H1 (cell line): ENCODE measurements at regions of chr12 and their contacts with region 1.

Region 1: DNA sequence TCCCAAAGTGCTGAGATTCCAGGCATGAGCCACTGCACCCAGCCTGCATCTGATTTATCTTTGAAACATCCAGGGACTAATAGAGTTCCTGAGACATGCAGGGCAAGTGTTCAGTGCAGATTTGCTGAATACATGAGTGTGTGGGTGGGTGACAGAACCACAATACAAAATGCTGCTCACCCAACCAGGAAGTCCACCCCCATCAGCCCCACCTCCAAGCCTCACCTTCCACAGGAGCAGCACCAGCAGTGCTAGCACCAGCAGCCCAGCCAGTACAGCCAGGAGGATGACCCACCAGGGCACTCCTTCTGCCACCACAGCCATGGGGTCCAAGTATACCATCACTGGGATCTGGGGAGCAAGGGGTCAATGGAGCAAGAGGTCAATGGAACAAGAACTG is 20.0 kb downstream of the ITGA7 start:
- DNase-seq: no peak
- H3K4me3 ChIP-seq: no peak overlapping the region
- H3K27ac ChIP-seq: no peak overlapping the region
- H3K4me1 ChIP-seq: no peaks in the 10 kb centered on the region
- H3K27me3 ChIP-seq: no peaks in the 10 kb centered on the region
- CTCF ChIP-seq: no peak
- EP300 ChIP-seq: no peak
- POLR2A ChIP-seq: no peak
- RAD21 ChIP-seq: no peak

Region 2: DNA sequence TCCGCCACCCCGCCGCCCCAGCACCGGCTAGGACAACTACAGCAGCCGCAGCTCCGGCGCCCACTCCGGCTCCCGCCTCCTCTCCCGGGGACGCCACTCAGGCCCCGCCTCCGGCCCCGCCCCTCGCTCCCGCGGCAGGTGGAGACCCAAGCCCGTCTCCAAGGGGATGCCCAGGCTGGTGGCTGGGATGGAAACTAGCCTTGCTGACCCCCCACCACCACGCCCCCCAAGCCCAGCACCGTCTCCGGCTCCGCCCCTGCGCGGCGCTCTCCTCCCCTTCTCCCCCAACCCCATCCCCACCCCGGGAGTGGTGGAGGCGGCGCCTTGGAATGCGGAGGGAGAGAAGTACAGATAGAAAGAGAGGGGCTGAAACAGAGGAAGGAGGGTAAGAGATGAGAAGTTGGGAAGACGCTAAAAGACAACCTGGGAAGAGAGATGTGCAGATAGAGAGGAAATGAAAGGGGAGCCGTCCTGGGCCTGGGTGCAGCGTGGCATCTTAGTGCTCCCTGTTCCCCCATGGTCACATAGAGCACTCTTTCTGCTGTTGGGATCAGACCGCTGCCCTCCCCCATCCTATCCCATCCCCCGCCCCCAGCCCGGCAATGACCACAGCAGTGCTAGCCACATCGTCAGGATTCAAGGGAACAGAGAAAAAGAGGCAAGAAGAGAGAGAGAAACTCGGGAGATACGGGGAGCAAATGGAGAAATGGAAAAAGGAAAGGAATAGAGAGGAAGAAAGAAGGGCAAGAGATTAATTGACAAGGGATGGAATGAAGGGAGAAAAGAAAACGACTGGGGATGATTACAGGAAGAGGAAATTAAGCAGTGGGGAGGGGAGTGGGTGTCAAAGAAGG is 20.3 kb after region 1 on chr12 and contains the start of gene ITGA7:
- CTCF ChIA-PET with region 1: interaction called, 34 read pairs
- POLR2A ChIA-PET with region 1: interaction called, 10 read pairs
- DNase-seq: peak; percentile 83 to 99
- H3K4me3 ChIP-seq: peak within 1 kb of the TSS; percentile 83 to 88 (median 86)
- H3K27ac ChIP-seq: 0 out of 2 replicates have a peak within 1 kb of the TSS, but pooled peaks have one; percentile 54
- H3K4me1 ChIP-seq: peaks cover 0 to 25% (median 8%) of the 10 kb centered on the region in 4 experiments; a peak in 5 of 7 replicates
- H3K27me3 ChIP-seq: peaks cover 0 to 3% (median 0%) of the 10 kb centered on the region in 4 experiments; a peak in 5 of 7 replicates
- CTCF ChIP-seq: no peak
- EP300 ChIP-seq: no peak
- POLR2A ChIP-seq: no peak
- RAD21 ChIP-seq: no peak
- total RNA-seq, gene ITGA7: 76.4 and 86.1 TPM in 2 replicates

Region 3: DNA sequence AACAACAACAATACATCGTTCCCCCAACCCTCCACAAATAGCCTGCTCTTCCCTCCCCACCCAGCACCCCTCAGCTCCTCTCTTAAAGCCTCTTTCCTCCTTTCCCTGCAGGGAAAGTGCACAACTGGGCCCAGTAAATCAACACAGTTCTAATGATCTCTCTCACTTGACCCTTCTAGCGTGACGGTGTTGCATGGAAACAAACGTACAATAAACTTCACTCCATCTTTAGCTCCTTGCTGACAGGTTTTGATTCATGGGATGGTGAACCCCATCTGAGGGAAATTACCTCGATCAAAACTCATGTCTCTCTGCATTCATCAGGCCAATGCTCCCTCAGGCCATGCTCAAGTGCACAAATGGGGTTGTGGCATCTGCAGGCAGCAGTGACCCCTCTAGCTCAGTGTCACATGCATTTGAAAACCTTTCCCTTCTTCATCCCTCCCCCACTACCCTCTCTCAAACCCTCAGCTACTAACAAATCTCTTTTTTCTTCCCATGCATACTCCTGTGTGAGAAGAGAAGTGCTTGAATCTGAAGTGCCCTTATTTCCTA is 78.1 kb after region 1 on chr12:
- CTCF ChIA-PET with region 1: no interaction called
- POLR2A ChIA-PET with region 1: no interaction called
- DNase-seq: no peak
- H3K4me3 ChIP-seq: no peak overlapping the region
- H3K27ac ChIP-seq: no peak overlapping the region
- H3K4me1 ChIP-seq: no peaks in the 10 kb centered on the region
- H3K27me3 ChIP-seq: no peaks in the 10 kb centered on the region
- CTCF ChIP-seq: no peak
- EP300 ChIP-seq: no peak
- POLR2A ChIP-seq: no peak; a peak in 1 of 3 replicates
- RAD21 ChIP-seq: no peak

Region 4: DNA sequence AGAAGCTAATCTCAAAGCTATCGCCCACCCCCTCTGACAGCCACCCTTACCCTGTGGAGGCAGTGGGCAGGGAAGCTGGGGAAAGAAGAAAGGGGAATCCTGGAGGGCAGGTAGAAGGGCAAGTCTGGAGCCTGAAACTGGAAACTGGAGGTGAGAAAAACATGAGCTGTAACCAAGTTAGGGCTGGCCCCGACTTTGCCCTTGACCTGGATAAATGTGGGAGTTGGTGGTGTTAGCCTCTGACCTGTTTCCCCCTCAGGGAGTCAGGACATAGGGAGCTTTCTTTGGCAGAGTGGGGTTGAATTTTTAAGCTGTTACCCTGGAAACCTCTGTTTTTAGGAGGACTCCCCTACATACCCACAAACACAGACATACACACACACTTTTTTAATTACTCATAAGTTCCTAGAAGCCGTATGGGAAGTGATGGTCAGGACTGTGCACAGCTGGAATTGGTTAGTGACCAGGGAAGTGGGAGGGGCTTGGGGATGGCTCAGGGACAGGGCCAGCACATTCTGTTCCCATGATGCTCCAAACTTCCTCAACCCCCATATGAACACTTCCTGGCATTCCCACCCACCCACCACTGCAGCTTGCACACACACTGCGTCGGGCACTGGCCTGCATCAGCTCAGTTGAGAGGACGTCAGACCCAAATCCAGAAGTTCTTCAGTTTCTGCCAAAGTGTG is 160.0 kb after region 1 on chr12:
- CTCF ChIA-PET with region 1: no interaction called
- POLR2A ChIA-PET with region 1: no interaction called
- DNase-seq: no peak
- H3K4me3 ChIP-seq: no peak overlapping the region
- H3K27ac ChIP-seq: no peak overlapping the region
- H3K4me1 ChIP-seq: peaks cover 0 to 3% (median 0%) of the 10 kb centered on the region in 4 experiments; a peak in 1 of 7 replicates
- H3K27me3 ChIP-seq: no peaks in the 10 kb centered on the region
- CTCF ChIP-seq: no peak
- EP300 ChIP-seq: no peak
- POLR2A ChIP-seq: no peak
- RAD21 ChIP-seq: no peak